ENCODE measurements at regions of chr7 and their contacts with region 1.

Region 1: GRCh38 chr7:134646425-134647305 is at the start of gene BPGM:
- H3K4me3 ChIP-seq: peak within 1 kb of the TSS; percentile 64
- H3K27ac ChIP-seq: no peak within 1 kb of the TSS; the same call in 1 of the 2 replicates
- H3K4me1 ChIP-seq: no peaks in the 10 kb centered on the region
- CTCF ChIP-seq: peak; percentile 75; the same call in 1 of the 2 replicates

Region 2: DNA sequence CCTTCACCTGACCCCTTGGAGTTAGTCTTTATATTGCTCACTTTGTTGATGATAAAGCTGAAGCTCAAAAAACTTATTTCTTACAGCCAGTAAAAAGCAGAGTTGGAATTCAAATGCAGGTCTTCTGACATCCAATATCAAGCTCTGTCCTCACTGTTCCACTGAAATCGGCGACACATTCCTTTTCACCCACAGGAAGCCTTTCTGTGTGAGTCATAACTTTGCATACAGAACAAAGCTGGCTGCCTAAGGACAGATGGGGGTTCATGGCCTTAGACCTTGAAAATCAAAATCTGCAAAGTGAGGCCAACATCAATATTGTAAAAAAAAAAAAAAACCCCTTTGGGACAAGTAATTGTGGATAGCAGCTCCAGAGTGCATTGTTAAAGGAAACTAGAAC is 165.9 kb before region 1 on chr7:
- CTCF ChIA-PET with region 1: no interaction called
- POLR2A ChIA-PET with region 1: no interaction called
- H3K4me3 ChIP-seq: no peak overlapping the region
- H3K27ac ChIP-seq: no peak overlapping the region
- H3K4me1 ChIP-seq: no peaks in the 10 kb centered on the region
- CTCF ChIP-seq: no peak

Region 3: GRCh38 chr7:134657526-134657925 is 10.9 kb after region 1 on chr7:
- CTCF ChIA-PET with region 1: interaction called, 8 read pairs
- POLR2A ChIA-PET with region 1: interaction called, 10 read pairs
- H3K4me3 ChIP-seq: no peak overlapping the region
- H3K27ac ChIP-seq: no peak overlapping the region
- H3K4me1 ChIP-seq: no peaks in the 10 kb centered on the region
- CTCF ChIP-seq: no peak

Measured in HEK293 (cell line).